Gastrocnemius medialis (tissue), 4 donors: ENCODE measurements at regions of chr18 and their contacts with region 1.

Region 1: DNA sequence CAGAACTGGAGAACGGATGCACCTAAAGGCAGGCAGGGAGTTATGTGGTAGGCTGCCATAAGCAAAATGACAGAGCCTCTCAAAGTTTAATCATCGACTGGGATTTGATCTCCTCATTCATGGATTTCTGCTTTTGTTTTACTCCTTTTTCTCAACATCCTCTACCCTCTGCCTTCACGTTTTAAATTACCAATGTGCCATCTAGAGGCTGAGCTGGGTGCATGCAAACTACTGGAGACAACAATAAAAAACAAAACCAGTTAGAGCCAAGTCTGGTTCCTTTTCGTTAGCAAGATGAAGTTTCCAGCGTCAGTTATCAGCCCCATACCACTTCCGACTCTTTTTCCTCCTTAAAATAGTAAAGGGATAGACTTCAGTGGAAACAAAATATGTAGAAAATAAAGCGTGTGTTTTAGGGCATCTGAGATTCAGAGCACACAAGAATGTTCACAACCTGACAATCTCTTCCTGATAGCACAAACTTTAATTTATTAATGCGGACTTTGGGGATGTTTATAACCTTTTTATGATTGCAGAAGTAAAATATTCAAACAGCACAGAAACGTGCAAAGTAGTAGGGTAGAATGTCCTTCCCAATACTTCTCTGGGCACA is 117.0 kb downstream of the LAMA1 start:
- DNase-seq: no peak
- ATAC-seq: no peak
- H3K4me3 ChIP-seq: no peak overlapping the region
- H3K27ac ChIP-seq: no peak overlapping the region
- H3K4me1 ChIP-seq: no peaks in the 10 kb centered on the region
- H3K27me3 ChIP-seq: no peaks in the 10 kb centered on the region
- CTCF ChIP-seq: no peak
- POLR2A ChIP-seq: no peak

Region 2: DNA sequence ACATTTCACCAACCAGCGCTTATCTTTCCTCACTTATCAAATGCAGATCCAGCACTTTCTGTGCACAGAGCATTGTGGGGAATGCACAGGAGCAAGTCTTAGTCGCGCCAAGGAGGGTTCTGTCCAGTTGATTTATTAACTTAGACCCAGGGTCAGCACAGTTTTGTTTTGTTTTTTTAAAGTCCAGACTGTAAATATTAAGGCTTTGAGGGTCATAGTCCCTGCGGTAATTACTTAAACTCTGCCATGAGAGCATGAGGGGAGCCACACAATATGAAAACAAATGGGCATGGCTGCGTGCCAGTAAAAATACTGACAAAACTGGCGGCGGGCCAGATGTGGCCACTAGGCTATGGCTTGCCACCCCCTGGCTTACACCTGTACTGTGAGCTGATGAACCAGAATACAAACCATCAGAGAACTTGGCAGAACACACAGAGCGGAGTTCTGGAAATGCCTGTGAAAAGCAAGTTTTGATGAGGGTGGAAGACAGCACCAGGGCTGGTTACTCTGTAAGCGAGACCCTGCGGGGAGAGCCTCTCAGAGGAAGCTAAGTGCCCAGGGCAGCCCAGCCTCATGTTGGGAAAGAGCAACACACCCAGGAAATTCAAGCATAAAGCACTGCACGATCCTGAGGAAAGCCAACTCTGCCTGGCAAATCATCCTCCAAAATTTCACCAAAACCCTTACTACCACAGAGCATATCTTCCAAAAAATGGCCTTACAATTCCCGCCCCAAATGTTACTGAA is 629.5 kb before region 1 on chr18:
- in situ Hi-C with region 1: no loop called
- intact Hi-C with region 1: no loop called
- DNase-seq: no peak
- ATAC-seq: no peak
- H3K4me3 ChIP-seq: no peak overlapping the region
- H3K27ac ChIP-seq: no peak overlapping the region
- H3K4me1 ChIP-seq: no peaks in the 10 kb centered on the region
- H3K27me3 ChIP-seq: no peaks in the 10 kb centered on the region
- CTCF ChIP-seq: no peak
- POLR2A ChIP-seq: no peak

Region 3: GRCh38 chr18:6948281-6949055 is 52.1 kb before region 1 on chr18:
- in situ Hi-C with region 1: loop called in 1 of 4 experiments (anchors 10 kb)
- intact Hi-C with region 1: no loop called
- DNase-seq: no peak
- ATAC-seq: no peak
- H3K4me3 ChIP-seq: no peak overlapping the region
- H3K27ac ChIP-seq: no peak overlapping the region
- H3K4me1 ChIP-seq: no peaks in the 10 kb centered on the region
- H3K27me3 ChIP-seq: no peaks in the 10 kb centered on the region
- CTCF ChIP-seq: no peak
- POLR2A ChIP-seq: no peak

Region 4: DNA sequence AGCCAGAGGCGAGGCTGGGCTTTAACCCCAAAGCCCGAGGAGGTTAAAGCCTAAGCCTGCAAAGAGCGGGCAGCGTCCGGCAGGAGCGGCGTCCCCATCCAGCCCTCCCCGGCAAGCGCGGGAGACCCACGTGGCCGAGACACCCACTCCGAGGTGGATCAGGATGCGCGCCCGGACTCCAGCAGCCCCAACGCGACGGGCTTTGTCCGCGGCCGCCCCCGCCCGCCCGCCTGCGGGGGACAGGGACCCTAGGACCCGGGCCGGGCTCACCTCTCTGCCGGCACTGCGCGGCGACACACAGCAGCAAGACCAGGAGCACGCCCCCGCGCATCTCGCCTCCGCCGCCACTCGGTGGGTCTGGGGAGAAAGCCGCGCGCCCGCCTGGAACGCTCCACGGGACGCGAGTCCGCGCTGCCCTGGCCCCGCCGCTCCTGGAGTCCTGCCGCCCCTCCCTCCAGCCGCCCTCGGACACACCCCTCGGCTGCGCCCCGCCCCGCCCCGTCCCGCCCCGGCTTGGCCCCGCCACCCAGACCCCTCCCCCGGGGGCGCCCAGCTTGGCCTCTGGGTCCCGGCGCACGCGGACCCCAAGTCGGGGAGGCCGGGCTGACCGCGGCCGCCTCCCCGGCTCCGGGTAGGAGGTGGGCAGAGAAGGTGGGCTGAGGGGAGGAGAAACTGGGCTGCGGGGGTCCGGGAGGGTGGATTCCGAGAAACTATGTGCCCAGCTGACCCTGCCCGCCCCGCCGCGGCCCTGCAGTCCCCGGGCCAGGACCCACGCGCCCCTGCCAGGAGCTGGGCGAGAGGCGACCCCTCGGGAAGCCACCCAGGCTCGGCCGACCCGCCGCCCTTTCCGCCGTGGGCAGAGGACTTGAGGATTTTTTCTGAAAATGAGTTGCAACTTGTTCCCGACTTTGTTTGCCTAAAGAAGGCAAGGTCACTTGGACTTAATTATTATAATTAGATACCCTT is 117.1 kb after region 1 on chr18 and contains the start of gene LAMA1:
- in situ Hi-C with region 1: no loop called
- intact Hi-C with region 1: no loop called
- DNase-seq: no peak
- ATAC-seq: no peak
- H3K4me3 ChIP-seq: peak within 1 kb of the TSS; percentile 43 to 65 (median 52)
- H3K27ac ChIP-seq: no peak within 1 kb of the TSS
- H3K4me1 ChIP-seq: peaks cover 10 to 15% of the 10 kb centered on the region in 2 donors
- H3K27me3 ChIP-seq: peaks cover 31 to 62% (median 47%) of the 10 kb centered on the region in 3 donors
- CTCF ChIP-seq: no peak
- POLR2A ChIP-seq: no peak
- total RNA-seq, gene LAMA1: 0.05 to 0.44 (median 0.09) TPM